ENCODE measurements at regions of chr15 and their contacts with region 1.

Region 1: DNA sequence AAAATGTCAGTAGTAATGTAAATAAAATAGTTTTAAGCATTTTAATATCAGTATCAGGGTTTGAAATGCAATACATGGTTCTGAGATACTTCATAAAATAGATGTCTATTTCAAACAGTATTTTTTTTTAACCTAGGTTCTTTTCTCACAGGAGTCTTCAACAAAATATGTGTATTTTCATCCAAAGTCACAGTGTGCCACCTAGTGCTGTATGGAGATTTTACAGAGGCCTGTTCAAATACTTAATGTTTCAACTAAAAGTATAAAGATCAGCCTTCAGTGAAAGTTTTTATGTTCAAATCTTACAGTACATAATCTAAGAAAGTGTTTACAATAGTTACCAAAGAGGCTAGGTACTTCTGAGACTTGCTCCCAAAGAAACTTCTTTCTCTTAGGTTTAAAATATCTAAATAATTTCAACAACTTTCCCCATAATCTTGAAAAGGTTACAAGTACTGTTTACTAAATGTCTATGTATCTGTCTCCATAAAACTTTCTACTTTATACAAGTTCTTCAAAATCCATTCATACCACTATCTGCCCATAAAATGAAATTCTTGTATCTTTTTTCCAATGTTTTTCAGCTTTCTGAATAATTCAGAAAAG is 38.3 kb downstream of the SCAPER start:
- DNase-seq: no peak
- ATAC-seq: peak; percentile 57 to 61
- H3K4me3 ChIP-seq: no peak overlapping the region
- H3K27ac ChIP-seq: peak overlapping the region in 3 of 4 donors; percentile 24 to 67 (median 34)
- H3K4me1 ChIP-seq: peaks cover 21 to 22% of the 10 kb centered on the region in 2 donors
- H3K27me3 ChIP-seq: no peaks in the 10 kb centered on the region
- CTCF ChIP-seq: peak in 3 of 5 experiments; percentile 49 to 62 (median 53)
- POLR2A ChIP-seq: no peak

Region 2: DNA sequence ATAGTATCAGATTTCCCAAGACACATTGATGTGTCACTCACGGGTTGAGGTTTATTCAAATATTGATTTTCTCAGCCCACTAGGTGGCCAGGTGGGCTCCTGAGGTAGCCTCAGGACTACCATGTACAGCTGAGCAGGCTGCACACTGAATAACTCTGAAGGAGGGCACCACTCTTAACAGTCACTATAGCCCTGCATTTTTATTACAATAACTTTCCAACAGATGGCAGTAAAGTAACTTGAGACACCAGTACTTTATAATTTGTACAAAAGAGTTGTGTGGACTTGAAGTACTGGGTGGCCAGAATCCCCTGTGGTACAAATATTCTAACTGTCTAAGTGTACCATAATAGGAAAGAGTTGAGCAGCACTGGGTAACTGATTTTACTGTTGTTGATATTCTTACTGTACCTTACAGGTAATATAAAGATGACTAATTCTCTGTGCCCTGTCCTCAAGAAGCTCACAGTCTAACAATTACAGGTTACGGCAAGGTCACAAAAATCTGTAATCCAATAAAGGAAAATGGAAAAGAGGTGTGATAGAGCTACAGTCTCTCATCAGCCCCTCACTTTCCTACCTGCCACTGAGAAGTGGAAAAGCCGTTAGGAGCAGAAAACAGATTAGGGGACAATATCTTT is 631.5 kb before region 1 on chr15:
- in situ Hi-C with region 1: no loop called
- intact Hi-C with region 1: loop called (anchors 10 kb)
- DNase-seq: no peak
- ATAC-seq: peak; percentile 39 to 93
- H3K4me3 ChIP-seq: no peak overlapping the region
- H3K27ac ChIP-seq: no peak overlapping the region
- H3K4me1 ChIP-seq: peaks cover 3 to 17% of the 10 kb centered on the region in 2 donors
- H3K27me3 ChIP-seq: no peaks in the 10 kb centered on the region
- CTCF ChIP-seq: peak in 4 of 5 experiments; percentile 34 to 63 (median 42)
- POLR2A ChIP-seq: no peak

Region 3: GRCh38 chr15:76336254-76337058 is 530.4 kb before region 1 on chr15 and contains the start of gene ISL2:
- in situ Hi-C with region 1: no loop called
- intact Hi-C with region 1: loop called (anchors 10 kb)
- DNase-seq: no peak
- ATAC-seq: no peak
- H3K4me3 ChIP-seq: peak within 1 kb of the TSS in 3 of 4 donors; percentile 22 to 45 (median 23)
- H3K27ac ChIP-seq: no peak within 1 kb of the TSS
- H3K4me1 ChIP-seq: peaks cover 31 to 35% of the 10 kb centered on the region in 2 donors
- H3K27me3 ChIP-seq: peaks cover 80 to 87% (median 81%) of the 10 kb centered on the region in 3 donors
- CTCF ChIP-seq: no peak
- POLR2A ChIP-seq: no peak
- total RNA-seq, gene ISL2: not detected

Region 4: GRCh38 chr15:76730262-76730661 is 136.6 kb before region 1 on chr15:
- in situ Hi-C with region 1: no loop called
- intact Hi-C with region 1: loop called (anchors 10 kb)
- DNase-seq: no peak
- ATAC-seq: no peak
- H3K4me3 ChIP-seq: no peak overlapping the region
- H3K27ac ChIP-seq: no peak overlapping the region
- H3K4me1 ChIP-seq: no peaks in the 10 kb centered on the region
- H3K27me3 ChIP-seq: no peaks in the 10 kb centered on the region
- CTCF ChIP-seq: no peak
- POLR2A ChIP-seq: no peak

Region 5: GRCh38 chr15:77036537-77037387 is 169.9 kb after region 1 on chr15:
- in situ Hi-C with region 1: no loop called
- intact Hi-C with region 1: no loop called
- DNase-seq: peak in 1 of 2 donors; percentile 17
- ATAC-seq: no peak
- H3K4me3 ChIP-seq: no peak overlapping the region
- H3K27ac ChIP-seq: peak overlapping the region in 1 of 4 donors; percentile 57
- H3K4me1 ChIP-seq: peaks cover 4 to 9% of the 10 kb centered on the region in 2 donors
- H3K27me3 ChIP-seq: no peaks in the 10 kb centered on the region
- CTCF ChIP-seq: no peak
- POLR2A ChIP-seq: no peak